Activated T-helper 2 cell treated with anti-CD3 and anti-CD28 coated beads, Interferon-gamma antibody, Interleukin-2, Interleukin-4, amounts not matched to agents 10 μg/mL and 5 μg/mL and 100 μg/mL, durations not matched to agents 14 hours and 24 hours and 36 hours (primary cell): ENCODE measurements at regions of chr6 and their contacts with region 1.

Region 1: GRCh38 chr6:144149891-144150709 is at the start of gene STX11:
- DNase-seq: peak; percentile 79
- H3K4me3 Mint-ChIP-seq: peak within 1 kb of the TSS; percentile 84
- H3K27ac Mint-ChIP-seq: peak within 1 kb of the TSS; percentile 94
- H3K4me1 Mint-ChIP-seq: peaks cover 49% of the 10 kb centered on the region
- H3K27me3 Mint-ChIP-seq: no peaks in the 10 kb centered on the region
- total RNA-seq, gene STX11: 19.2 and 19.7 TPM in 2 replicates

Region 2: DNA sequence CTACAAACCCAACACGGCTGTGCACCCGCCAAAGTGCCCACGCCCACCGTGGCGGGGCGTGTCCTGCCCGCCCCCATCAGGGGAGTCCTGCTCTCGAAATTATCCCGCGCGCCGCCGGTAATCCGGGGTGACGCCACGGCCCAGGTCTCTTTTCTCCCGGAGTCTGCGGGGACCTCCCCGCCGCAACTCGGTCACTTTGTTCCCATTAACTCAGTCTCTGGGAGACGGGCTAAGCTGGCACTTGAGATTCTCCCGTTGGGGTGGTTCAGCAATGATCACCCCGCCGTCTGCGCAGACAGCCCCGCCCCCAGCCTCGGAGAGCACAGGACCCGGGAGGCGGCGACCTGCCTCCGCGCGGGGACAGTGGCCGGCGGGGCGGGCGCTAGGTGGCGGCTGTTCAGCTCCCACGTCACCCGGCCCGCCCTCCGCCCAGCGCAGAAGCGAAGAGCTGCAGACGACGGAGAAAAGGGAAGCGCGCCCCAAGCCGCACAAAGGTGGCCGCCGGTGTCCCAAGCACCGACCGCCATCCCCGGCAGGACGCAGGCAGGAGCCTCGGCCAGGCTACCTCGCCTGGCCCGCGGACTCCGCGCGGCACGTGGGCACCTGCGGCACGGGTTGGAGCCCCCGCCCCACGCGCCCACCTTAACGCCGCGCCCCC is 86.2 kb before region 1 on chr6:
- intact Hi-C with region 1: loop called (anchors 1 kb)
- DNase-seq: peak; percentile 89
- H3K4me3 Mint-ChIP-seq: peak overlapping the region; percentile 87
- H3K27ac Mint-ChIP-seq: peak overlapping the region; percentile 89
- H3K4me1 Mint-ChIP-seq: peaks cover 43% of the 10 kb centered on the region
- H3K27me3 Mint-ChIP-seq: no peaks in the 10 kb centered on the region

Region 3: DNA sequence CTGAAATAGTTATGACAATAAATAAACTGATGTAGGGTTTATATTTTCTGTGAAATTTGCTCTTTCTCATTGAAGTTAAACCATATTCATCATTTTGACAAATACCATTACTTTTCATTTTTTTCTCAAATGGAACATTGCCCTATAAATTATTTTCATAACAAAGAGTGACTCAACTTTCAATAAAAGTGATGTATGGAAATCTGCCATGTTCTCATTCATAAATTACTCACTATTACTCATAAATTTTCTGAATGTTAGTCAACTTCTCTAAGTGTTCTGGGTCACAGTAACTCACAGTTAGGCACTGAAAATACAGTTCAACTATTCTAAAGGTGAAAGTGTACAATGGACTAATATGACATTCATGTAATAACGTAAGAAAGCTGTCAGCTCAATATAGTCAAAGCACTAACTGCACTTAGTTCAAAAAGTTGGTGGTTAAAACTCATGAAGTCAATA is 18.8 kb before region 1 on chr6:
- intact Hi-C with region 1: loop called (anchors 1 kb)
- DNase-seq: no peak
- H3K4me3 Mint-ChIP-seq: peak overlapping the region; percentile 19
- H3K27ac Mint-ChIP-seq: peak overlapping the region; percentile 84
- H3K4me1 Mint-ChIP-seq: peaks cover 29% of the 10 kb centered on the region
- H3K27me3 Mint-ChIP-seq: peaks cover 4% of the 10 kb centered on the region

Region 4: GRCh38 chr6:144343701-144344428 is 193.8 kb after region 1 on chr6:
- intact Hi-C with region 1: loop called (anchors 2 kb)
- DNase-seq: peak; percentile 44
- H3K4me3 Mint-ChIP-seq: peak overlapping the region; percentile 93
- H3K27ac Mint-ChIP-seq: peak overlapping the region; percentile 99
- H3K4me1 Mint-ChIP-seq: peaks cover 67% of the 10 kb centered on the region
- H3K27me3 Mint-ChIP-seq: no peaks in the 10 kb centered on the region